Posterior vena cava (tissue), 2 donors: ENCODE measurements at regions of chr5 and their contacts with region 1.

Region 1: GRCh38 chr5:113663880-113664541 is 150.5 kb downstream of the YTHDC2 start:
- DNase-seq: no peak

Region 2: DNA sequence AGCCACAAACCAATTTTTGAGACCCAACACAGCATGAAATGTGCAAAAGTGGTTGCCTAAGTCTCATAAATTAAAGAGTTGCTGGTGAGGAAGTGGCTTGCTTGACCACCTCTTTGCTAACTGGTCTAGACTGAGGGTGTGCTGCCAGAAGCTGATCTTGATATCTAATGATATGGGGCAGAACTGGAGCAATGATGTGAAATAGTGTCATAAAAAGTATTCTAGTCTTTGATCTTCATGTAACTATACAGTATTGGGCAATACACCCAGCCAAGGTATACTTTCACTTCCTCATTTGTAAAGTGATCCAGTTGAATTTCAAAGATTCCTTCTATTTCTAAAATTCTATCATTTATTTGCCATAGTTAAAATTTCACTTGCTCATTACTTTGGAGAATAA is 156.4 kb before region 1 on chr5:
- intact Hi-C with region 1: loop called in 1 of 2 experiments (anchors 5 kb)
- DNase-seq: no peak

Region 3: DNA sequence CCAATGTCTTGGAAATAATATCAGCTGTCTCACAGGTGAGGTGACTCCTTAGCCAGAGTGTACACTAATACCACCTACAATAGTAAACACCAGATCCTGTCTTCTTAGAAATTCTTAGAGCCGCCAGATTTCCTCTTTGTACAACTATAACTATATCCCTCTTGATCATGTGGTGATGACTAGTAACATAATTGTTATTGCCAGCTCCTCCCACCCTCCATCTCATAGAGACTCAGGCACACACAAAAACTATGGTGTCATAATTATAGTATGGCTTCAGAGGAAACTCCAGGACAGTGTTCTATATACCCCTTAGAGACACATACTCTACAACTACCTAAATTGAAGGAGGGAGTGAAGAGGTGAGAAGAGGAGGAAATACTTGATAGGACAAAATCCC is 1565.6 kb after region 1 on chr5:
- intact Hi-C with region 1: loop called in 1 of 2 experiments (anchors 5 kb)
- DNase-seq: no peak